Activated naive CD4-positive, alpha-beta T cell treated with anti-CD3 and anti-CD28 coated beads for 36 hours (primary cell): ENCODE measurements at regions of chr3 and their contacts with region 1.

Region 1: DNA sequence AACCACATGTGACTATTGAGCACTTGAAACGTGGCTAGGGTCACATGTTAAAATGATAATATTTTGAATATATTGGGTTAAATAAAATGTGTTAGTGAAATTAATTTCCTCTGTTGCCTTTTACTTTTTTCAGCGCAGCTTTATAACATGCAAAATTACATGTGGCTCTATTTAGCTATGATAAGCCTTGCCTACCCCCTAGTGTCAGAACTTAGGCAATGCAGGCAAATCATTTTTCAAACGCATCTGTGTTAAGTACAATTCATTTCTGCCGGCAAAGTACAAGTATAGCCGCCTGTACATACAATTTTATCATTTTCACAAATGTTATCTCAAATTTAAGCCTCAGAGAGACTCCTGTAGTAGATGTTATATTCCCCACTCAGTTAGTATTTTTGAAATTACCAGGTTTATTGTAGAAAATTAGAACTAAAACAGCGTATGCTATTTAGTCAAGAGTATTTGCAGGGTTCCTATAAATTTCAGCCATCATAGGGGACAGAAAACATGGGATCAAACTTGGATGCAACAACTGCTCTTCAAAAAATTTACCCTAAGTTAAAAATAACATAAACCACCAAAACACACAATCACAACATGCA is 56.1 kb downstream of the TAFA4 start:
- DNase-seq: peak; percentile 51
- H3K4me3 Mint-ChIP-seq: no peak overlapping the region
- H3K27ac Mint-ChIP-seq: no peak overlapping the region
- H3K4me1 Mint-ChIP-seq: no peaks in the 10 kb centered on the region
- H3K27me3 Mint-ChIP-seq: peaks cover 5% of the 10 kb centered on the region

Region 2: DNA sequence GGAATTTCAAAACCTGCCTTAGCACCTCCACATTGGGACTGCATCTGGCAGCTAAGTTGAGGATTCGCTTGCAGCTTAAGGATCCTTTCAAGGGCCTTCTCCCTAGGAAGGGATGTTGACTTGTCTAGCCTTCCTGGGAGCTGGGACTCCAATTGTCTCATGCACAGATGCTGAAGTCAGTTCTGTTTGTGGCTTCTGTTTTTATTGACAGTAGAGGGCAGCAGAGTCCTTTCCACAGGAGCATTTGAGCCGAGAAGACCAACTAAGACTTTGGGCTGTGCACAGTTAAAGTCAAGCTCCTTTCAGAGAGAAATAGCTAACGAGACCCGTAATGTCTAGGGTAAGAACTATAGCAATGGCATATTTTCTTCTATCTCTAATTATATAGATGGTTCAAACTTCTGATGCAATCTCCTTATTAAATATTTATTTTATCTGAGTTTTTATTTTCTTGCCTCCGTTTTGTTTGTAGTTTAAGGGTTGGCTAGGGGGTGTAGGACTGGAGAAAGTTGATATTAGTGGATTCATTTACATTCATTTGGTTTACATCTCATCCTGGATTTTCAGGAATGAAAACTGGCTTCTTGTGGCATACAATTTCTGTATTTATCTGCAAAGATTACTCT is 1937.8 kb before region 1 on chr3:
- CTCF ChIA-PET with region 1: interaction called, 5 read pairs
- intact Hi-C with region 1: loop called (anchors 1 kb)
- DNase-seq: peak; percentile 48
- H3K4me3 Mint-ChIP-seq: no peak overlapping the region
- H3K27ac Mint-ChIP-seq: no peak overlapping the region
- H3K4me1 Mint-ChIP-seq: no peaks in the 10 kb centered on the region
- H3K27me3 Mint-ChIP-seq: peaks cover 7% of the 10 kb centered on the region

Region 3: DNA sequence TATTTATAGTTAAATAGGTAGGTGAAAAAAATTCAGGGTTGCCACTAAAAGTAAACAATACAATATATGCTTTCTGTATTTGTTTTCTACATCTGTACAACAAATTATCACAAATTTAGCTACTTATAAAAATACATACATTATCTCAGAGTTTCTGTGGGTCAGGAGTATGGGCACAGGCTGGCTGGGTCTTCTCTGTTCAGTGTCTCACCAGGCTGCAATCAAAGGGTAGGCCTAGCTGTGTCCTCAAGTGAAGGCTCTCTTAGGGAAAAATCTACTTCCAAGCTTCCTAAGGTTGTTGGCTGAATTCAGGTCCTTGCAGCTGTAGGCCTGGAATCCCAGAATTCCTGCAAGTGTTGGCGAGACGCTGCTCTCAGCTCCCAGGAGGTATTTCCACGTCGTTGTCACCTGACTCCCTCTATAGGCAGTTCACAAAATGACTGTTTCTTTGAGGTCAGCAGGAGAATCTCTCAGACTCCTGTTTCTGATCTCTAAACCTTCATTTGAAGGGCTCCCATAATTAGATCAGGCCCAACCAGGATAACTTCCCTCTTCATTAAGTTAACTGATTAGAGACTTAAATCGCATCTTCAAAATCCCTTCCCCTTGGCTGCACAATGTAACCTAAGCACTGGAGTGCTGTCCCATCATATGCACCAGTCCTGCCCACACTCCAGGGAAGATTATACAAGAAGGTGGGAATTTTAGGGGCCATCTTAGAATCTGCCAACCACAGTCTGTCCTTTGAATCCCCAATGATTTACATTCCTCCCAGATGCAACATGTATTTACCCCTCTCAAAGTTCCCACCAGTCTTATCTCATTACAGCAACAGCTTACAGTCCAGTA is 1518.4 kb before region 1 on chr3:
- CTCF ChIA-PET with region 1: no interaction called
- intact Hi-C with region 1: loop called (anchors 10 kb)
- DNase-seq: no peak
- H3K4me3 Mint-ChIP-seq: no peak overlapping the region
- H3K27ac Mint-ChIP-seq: no peak overlapping the region
- H3K4me1 Mint-ChIP-seq: peaks cover 24% of the 10 kb centered on the region
- H3K27me3 Mint-ChIP-seq: no peaks in the 10 kb centered on the region

Region 4: DNA sequence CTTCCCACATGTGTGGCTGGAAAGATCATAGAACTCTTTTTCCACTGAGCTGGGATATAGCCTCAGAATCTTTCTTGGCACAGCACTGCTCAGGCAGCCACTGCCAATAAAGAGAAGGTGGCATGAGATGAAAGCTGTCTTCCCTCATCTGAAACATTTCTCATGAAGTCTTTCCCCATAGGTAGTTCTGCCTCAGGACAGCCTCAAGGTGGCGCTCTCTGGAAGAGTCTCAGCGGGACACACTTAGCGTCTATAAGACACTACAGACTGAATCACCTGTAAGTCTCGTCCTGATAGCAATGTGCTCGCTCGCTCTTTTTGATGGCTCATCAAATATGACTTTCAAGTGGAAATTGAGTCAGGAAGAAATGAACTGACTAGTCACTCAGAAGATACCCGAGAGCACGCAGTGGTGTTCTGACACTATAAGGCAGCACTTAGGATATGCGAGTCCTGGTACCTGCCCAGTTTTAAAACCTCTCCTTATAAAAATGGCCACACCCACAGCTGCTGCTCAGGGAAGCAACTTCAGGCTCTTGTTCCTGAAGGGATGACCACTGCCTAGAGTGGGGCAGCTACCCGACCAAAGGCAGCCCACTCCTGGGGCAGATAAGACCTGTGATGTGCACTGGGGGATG is 1491.3 kb before region 1 on chr3:
- CTCF ChIA-PET with region 1: no interaction called
- intact Hi-C with region 1: loop called (anchors 10 kb)
- DNase-seq: peak; percentile 67
- H3K4me3 Mint-ChIP-seq: no peak overlapping the region
- H3K27ac Mint-ChIP-seq: no peak overlapping the region
- H3K4me1 Mint-ChIP-seq: peaks cover 31% of the 10 kb centered on the region
- H3K27me3 Mint-ChIP-seq: no peaks in the 10 kb centered on the region

Region 5: GRCh38 chr3:67685499-67685898 is 1190.7 kb before region 1 on chr3:
- CTCF ChIA-PET with region 1: no interaction called
- intact Hi-C with region 1: loop called (anchors 10 kb)
- DNase-seq: peak; percentile 12
- H3K4me3 Mint-ChIP-seq: peak overlapping the region; percentile 17
- H3K27ac Mint-ChIP-seq: peak overlapping the region; percentile 54
- H3K4me1 Mint-ChIP-seq: peaks cover 32% of the 10 kb centered on the region
- H3K27me3 Mint-ChIP-seq: no peaks in the 10 kb centered on the region

Region 6: GRCh38 chr3:67819447-67819846 is 1056.8 kb before region 1 on chr3:
- CTCF ChIA-PET with region 1: no interaction called
- intact Hi-C with region 1: loop called (anchors 1 kb)
- DNase-seq: peak; percentile 37
- H3K4me3 Mint-ChIP-seq: no peak overlapping the region
- H3K27ac Mint-ChIP-seq: no peak overlapping the region
- H3K4me1 Mint-ChIP-seq: peaks cover 2% of the 10 kb centered on the region
- H3K27me3 Mint-ChIP-seq: no peaks in the 10 kb centered on the region

Region 7: DNA sequence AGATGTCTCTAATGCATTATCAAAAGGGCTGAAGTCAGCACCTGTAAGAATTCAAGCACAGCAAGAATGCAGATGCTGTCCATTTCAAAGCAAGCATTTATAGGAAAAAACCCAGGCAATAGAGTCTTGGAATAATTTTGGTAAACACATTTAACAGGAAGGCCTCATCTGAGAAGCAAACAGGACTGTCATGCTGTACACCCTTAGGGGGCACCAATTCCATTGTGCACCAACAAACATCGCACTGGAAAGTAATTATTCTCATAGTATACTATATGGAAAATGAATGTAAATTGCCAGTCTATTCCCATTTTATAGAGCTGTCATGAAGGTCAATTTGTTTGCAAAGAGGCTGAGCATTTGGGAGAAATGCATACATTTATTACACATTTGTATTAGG is 974.5 kb before region 1 on chr3:
- CTCF ChIA-PET with region 1: interaction called, 4 read pairs
- intact Hi-C with region 1: loop called (anchors 5 kb)
- DNase-seq: peak; percentile 12
- H3K4me3 Mint-ChIP-seq: no peak overlapping the region
- H3K27ac Mint-ChIP-seq: no peak overlapping the region
- H3K4me1 Mint-ChIP-seq: peaks cover 12% of the 10 kb centered on the region
- H3K27me3 Mint-ChIP-seq: no peaks in the 10 kb centered on the region

Region 8: DNA sequence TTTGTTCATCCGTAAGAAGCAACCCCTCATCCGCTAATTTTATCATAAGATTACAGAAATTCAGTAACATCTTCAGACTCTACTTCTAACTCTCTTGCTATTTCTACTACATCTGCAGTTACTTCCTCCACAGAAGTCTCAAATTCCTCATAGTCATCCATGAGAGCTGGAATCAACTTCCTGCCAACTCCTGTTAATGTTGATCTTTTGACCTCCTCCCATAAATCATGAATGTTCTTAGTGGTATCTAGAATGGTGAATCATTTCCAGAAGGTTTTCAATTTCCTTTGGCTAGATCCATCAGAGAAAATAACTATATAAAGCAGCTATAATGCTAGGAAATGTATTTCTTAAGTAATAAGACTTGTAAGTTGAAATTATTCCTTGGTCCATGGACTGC is 59.0 kb before region 1 on chr3:
- CTCF ChIA-PET with region 1: no interaction called
- intact Hi-C with region 1: no loop called
- DNase-seq: no peak
- H3K4me3 Mint-ChIP-seq: no peak overlapping the region
- H3K27ac Mint-ChIP-seq: no peak overlapping the region
- H3K4me1 Mint-ChIP-seq: no peaks in the 10 kb centered on the region
- H3K27me3 Mint-ChIP-seq: no peaks in the 10 kb centered on the region